Naive thymus-derived CD4-positive, alpha-beta T cell (primary cell): ENCODE measurements at regions of chr5 and their contacts with region 1.

Region 1: DNA sequence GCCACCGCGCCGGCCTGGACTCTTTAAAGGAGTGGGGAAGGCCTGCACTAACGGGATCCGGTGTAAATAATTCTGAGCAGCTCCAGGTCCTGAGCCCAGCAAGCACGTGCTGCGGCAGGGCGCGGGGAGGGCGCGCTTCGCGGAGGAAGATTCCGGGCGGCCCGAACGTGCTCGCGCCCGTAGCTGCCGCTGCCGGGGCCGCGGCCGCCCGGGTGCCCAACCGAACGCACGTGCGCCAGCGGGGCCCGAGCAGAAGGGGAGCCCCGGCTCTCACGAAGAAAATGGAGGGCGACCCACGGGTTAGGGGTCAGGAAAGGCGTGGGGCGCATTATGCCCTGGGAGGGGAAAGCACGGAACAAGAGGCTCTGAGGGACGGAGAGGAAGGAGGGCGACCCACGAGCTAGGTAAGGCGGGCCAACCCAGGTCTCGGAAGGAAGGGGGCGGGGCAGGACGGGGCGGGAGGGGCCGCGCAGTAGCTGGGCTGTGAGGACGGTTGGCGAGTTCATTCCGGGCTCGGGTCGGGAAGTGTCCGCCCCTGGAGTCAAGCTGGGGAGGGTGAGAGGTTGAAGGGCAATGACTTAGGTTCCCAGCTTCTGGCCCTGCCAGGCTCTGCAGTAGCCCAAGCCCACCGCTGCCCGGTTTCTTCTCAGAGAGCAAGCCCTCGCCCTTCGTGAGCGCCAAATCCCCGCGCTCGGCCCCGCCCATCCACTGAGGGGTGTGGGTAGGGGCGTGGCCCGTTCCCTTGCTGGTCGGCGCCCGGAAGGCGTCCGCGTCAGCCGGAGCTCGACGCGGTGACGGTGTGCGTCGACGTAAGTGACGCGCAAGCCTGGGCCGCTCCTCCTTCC is at the start of gene ZNF131:
- DNase-seq: peak; percentile 95 to 99 (median 98)
- ATAC-seq: peak; percentile 93
- H3K4me3 ChIP-seq: peak within 1 kb of the TSS; percentile 70
- H3K4me3 Mint-ChIP-seq: peak within 1 kb of the TSS; percentile 89 to 98 (median 96)
- H3K27ac ChIP-seq: peak within 1 kb of the TSS; percentile 97
- H3K27ac Mint-ChIP-seq: peak within 1 kb of the TSS; percentile 86 to 99 (median 96)
- H3K4me1 ChIP-seq: peaks cover 27 to 30% of the 10 kb centered on the region in 2 donors
- H3K4me1 Mint-ChIP-seq: peaks cover 22 to 47% (median 44%) of the 10 kb centered on the region in 7 donors
- H3K27me3 ChIP-seq: no peaks in the 10 kb centered on the region
- H3K27me3 Mint-ChIP-seq: peaks cover 0 to 4% (median 0%) of the 10 kb centered on the region in 5 donors
- total RNA-seq, gene ZNF131: 47.2 to 83.4 (median 67.8) TPM

Region 2: GRCh38 chr5:41903892-41904799 is 1216.8 kb before region 1 on chr5 and contains the start of gene RIMOC1:
- CTCF ChIA-PET with region 1: no interaction called
- POLR2A ChIA-PET with region 1: interaction called, 7 read pairs
- intact Hi-C with region 1: loop called (anchors 1 to 10 kb)
- DNase-seq: peak; percentile 94 to 98 (median 97)
- ATAC-seq: peak; percentile 94
- H3K4me3 ChIP-seq: peak within 1 kb of the TSS; percentile 90
- H3K4me3 Mint-ChIP-seq: peak within 1 kb of the TSS; percentile 84 to 99 (median 98)
- H3K27ac ChIP-seq: peak within 1 kb of the TSS; percentile 85
- H3K27ac Mint-ChIP-seq: peak within 1 kb of the TSS; percentile 97 to 100 (median 99)
- H3K4me1 ChIP-seq: peaks cover 16 to 18% of the 10 kb centered on the region in 2 donors
- H3K4me1 Mint-ChIP-seq: peaks cover 21 to 54% (median 46%) of the 10 kb centered on the region in 7 donors
- H3K27me3 ChIP-seq: no peaks in the 10 kb centered on the region
- H3K27me3 Mint-ChIP-seq: peaks cover 0 to 11% (median 0%) of the 10 kb centered on the region in 5 donors
- total RNA-seq, gene RIMOC1: 13.8 to 40.6 (median 27.5) TPM

Region 3: GRCh38 chr5:42274913-42275312 is 846.0 kb before region 1 on chr5:
- CTCF ChIA-PET with region 1: no interaction called
- POLR2A ChIA-PET with region 1: no interaction called
- intact Hi-C with region 1: no loop called
- DNase-seq: no peak
- ATAC-seq: no peak
- H3K4me3 ChIP-seq: no peak overlapping the region
- H3K4me3 Mint-ChIP-seq: no peak overlapping the region
- H3K27ac ChIP-seq: no peak overlapping the region
- H3K27ac Mint-ChIP-seq: no peak overlapping the region
- H3K4me1 ChIP-seq: no peaks in the 10 kb centered on the region
- H3K4me1 Mint-ChIP-seq: no peaks in the 10 kb centered on the region
- H3K27me3 ChIP-seq: no peaks in the 10 kb centered on the region
- H3K27me3 Mint-ChIP-seq: peaks cover 0 to 7% (median 0%) of the 10 kb centered on the region in 5 donors

Region 4: DNA sequence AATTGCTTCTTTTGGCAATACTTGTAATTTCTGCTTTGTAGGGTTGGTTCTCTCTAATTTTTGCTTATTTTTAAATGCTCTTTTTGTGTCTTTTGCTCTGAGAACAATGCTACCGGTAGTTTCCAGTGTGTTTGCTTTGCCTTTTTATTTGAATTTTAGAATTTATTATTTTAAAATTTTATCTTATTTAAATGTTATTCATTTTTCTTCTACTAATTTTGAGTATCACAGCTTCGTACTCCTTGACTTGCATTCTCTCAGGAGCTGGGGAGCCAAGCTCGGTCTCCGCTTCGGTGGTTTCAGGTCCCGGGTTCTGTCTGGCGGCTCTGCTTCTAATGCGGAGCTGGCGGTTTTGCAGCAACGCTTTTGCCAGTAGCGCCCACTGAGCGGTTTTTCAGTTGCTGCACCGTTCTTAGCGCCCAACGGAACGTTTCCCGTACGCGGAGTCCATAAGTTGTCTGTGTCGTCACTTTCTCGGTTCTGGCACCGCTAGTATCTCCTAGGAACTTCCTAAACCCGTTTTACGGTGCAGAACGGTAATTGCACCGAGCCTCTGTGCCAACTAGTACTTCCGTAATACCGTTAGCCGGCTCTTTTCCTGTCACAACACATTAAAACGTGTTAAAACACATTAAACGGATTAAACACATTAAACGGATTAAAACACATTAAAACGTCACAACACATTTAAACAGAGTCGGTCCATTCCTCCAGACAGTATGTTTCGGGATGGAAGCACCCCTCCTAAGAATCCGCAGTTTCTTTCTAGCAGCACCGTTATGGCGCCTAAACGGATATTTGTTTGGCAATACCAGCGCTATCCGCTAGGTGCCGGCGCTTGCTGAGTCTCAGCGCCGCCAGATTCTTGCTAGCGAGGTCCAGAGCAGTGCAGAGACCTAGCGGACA is 126.4 kb before region 1 on chr5:
- CTCF ChIA-PET with region 1: interaction called, 9 read pairs
- POLR2A ChIA-PET with region 1: interaction called, 114 read pairs
- intact Hi-C with region 1: loop called (anchors 1 kb)
- DNase-seq: peak; percentile 73 to 89 (median 85)
- ATAC-seq: peak; percentile 73
- H3K4me3 ChIP-seq: peak overlapping the region; percentile 84
- H3K4me3 Mint-ChIP-seq: peak overlapping the region; percentile 84 to 100 (median 98)
- H3K27ac ChIP-seq: peak overlapping the region; percentile 89
- H3K27ac Mint-ChIP-seq: peak overlapping the region; percentile 97 to 100 (median 100)
- H3K4me1 ChIP-seq: peaks cover 18 to 21% of the 10 kb centered on the region in 2 donors
- H3K4me1 Mint-ChIP-seq: peaks cover 16 to 49% (median 29%) of the 10 kb centered on the region in 7 donors
- H3K27me3 ChIP-seq: no peaks in the 10 kb centered on the region
- H3K27me3 Mint-ChIP-seq: peaks cover 0 to under 1% (median 0%) of the 10 kb centered on the region in 5 donors

Region 5: DNA sequence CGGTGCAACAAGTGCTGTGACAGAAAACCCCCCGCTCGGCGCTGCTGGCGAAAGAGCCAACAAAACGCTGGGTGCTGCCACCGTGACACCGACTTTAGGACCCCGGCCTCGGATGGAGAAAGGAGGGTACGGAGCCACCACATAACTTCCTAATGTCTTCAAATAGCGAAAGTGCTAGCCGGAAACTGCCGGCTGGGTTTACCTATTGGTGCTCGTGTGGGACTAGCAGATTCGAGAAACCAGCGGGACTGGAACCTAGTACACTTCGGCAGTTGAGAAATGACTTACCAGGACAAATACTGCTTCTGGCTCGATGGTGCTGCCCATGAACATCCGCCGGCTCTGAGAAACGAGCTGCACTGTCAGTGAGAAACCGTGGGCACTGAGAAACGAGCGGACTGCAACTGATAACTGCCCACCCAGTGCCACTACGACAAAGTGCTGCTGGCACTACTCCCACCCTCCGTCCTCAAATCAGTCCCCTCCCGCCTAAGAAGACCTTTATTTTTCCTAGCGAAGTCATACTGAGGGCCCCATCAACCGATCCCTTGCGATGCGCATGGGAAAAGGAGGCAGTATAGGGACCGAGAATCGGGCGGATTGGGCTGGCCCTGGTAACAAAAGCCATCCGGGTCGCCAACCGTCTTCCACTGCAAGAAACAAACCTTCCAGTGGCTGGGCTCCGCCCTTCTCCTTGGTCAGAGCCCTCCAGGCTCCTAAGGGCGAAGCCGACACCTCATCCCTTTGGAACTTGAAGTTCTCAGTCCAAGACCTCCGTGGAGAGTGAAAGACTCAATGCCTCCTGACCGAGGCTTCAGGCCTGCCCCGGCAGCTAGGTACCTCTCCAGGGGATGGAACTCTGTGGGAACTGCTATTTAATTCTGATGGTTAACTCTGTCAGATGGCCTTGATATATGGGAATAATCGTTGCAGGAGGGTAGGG is 53.9 kb before region 1 on chr5:
- CTCF ChIA-PET with region 1: interaction called, 13 read pairs
- POLR2A ChIA-PET with region 1: interaction called, 127 read pairs
- intact Hi-C with region 1: loop called (anchors 1 kb)
- DNase-seq: peak; percentile 80 to 96 (median 89)
- ATAC-seq: peak; percentile 69
- H3K4me3 ChIP-seq: peak overlapping the region; percentile 82
- H3K4me3 Mint-ChIP-seq: peak overlapping the region; percentile 93 to 100 (median 98)
- H3K27ac ChIP-seq: peak overlapping the region; percentile 90
- H3K27ac Mint-ChIP-seq: peak overlapping the region; percentile 99 to 100 (median 99)
- H3K4me1 ChIP-seq: peaks cover 25 to 33% of the 10 kb centered on the region in 2 donors
- H3K4me1 Mint-ChIP-seq: peaks cover 26 to 67% (median 44%) of the 10 kb centered on the region in 7 donors
- H3K27me3 ChIP-seq: no peaks in the 10 kb centered on the region
- H3K27me3 Mint-ChIP-seq: no peaks in the 10 kb centered on the region

Region 6: DNA sequence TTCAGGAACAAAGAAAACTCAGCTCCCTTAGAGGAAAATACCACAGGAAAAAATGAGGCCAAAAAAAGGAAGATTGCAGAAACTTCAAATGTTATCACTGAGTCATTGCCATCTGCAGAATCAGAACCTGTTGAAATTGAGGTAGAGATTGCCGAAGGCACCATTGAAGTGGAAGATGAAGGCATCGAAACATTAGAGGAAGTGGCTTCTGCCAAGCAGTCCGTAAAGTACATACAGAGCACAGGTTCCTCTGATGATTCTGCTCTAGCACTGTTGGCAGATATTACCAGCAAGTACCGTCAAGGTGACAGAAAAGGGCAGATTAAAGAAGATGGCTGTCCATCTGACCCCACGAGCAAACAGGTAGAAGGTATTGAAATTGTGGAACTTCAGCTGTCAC is 40.3 kb after region 1 on chr5:
- CTCF ChIA-PET with region 1: no interaction called
- POLR2A ChIA-PET with region 1: interaction called, 3 read pairs
- intact Hi-C with region 1: loop called in 1 of 2 experiments (anchors 5 kb)
- DNase-seq: peak in 6 of 9 donors; percentile 20 to 60 (median 49)
- ATAC-seq: peak; percentile 74
- H3K4me3 ChIP-seq: no peak overlapping the region
- H3K4me3 Mint-ChIP-seq: peak overlapping the region in 6 of 10 donors; percentile 6 to 51 (median 27)
- H3K27ac ChIP-seq: peak overlapping the region; percentile 14
- H3K27ac Mint-ChIP-seq: peak overlapping the region; percentile 9 to 87 (median 63)
- H3K4me1 ChIP-seq: peaks cover 0 to 6% of the 10 kb centered on the region in 2 donors
- H3K4me1 Mint-ChIP-seq: peaks cover 14 to 46% (median 23%) of the 10 kb centered on the region in 7 donors
- H3K27me3 ChIP-seq: no peaks in the 10 kb centered on the region
- H3K27me3 Mint-ChIP-seq: no peaks in the 10 kb centered on the region

Region 7: GRCh38 chr5:43396762-43397304 is 275.9 kb after region 1 on chr5:
- CTCF ChIA-PET with region 1: interaction called, 3 read pairs
- POLR2A ChIA-PET with region 1: no interaction called
- intact Hi-C with region 1: loop called (anchors 1 to 5 kb)
- DNase-seq: peak; percentile 42 to 74 (median 66)
- ATAC-seq: peak; percentile 96
- H3K4me3 ChIP-seq: peak overlapping the region; percentile 80
- H3K4me3 Mint-ChIP-seq: peak overlapping the region; percentile 88 to 100 (median 98)
- H3K27ac ChIP-seq: peak overlapping the region; percentile 76
- H3K27ac Mint-ChIP-seq: peak overlapping the region; percentile 93 to 99 (median 97)
- H3K4me1 ChIP-seq: peaks cover 3 to 7% of the 10 kb centered on the region in 2 donors
- H3K4me1 Mint-ChIP-seq: peaks cover 15 to 62% (median 41%) of the 10 kb centered on the region in 7 donors
- H3K27me3 ChIP-seq: no peaks in the 10 kb centered on the region
- H3K27me3 Mint-ChIP-seq: no peaks in the 10 kb centered on the region

Region 8: GRCh38 chr5:44808435-44809214 is 1687.7 kb after region 1 on chr5 and contains the start of gene MRPS30:
- CTCF ChIA-PET with region 1: no interaction called
- POLR2A ChIA-PET with region 1: no interaction called
- intact Hi-C with region 1: loop called (anchors 5 kb)
- DNase-seq: peak; percentile 65 to 96 (median 94)
- ATAC-seq: peak; percentile 98
- H3K4me3 ChIP-seq: peak within 1 kb of the TSS; percentile 85
- H3K4me3 Mint-ChIP-seq: peak within 1 kb of the TSS; percentile 86 to 98 (median 96)
- H3K27ac ChIP-seq: peak within 1 kb of the TSS; percentile 81
- H3K27ac Mint-ChIP-seq: peak within 1 kb of the TSS; percentile 84 to 98 (median 95)
- H3K4me1 ChIP-seq: peaks cover 0 to 20% of the 10 kb centered on the region in 2 donors
- H3K4me1 Mint-ChIP-seq: peaks cover 12 to 53% (median 36%) of the 10 kb centered on the region in 7 donors
- H3K27me3 ChIP-seq: no peaks in the 10 kb centered on the region
- H3K27me3 Mint-ChIP-seq: peaks cover 0 to 5% (median 3%) of the 10 kb centered on the region in 5 donors
- total RNA-seq, gene MRPS30: 31.1 to 61.0 (median 47.1) TPM

Region 9: DNA sequence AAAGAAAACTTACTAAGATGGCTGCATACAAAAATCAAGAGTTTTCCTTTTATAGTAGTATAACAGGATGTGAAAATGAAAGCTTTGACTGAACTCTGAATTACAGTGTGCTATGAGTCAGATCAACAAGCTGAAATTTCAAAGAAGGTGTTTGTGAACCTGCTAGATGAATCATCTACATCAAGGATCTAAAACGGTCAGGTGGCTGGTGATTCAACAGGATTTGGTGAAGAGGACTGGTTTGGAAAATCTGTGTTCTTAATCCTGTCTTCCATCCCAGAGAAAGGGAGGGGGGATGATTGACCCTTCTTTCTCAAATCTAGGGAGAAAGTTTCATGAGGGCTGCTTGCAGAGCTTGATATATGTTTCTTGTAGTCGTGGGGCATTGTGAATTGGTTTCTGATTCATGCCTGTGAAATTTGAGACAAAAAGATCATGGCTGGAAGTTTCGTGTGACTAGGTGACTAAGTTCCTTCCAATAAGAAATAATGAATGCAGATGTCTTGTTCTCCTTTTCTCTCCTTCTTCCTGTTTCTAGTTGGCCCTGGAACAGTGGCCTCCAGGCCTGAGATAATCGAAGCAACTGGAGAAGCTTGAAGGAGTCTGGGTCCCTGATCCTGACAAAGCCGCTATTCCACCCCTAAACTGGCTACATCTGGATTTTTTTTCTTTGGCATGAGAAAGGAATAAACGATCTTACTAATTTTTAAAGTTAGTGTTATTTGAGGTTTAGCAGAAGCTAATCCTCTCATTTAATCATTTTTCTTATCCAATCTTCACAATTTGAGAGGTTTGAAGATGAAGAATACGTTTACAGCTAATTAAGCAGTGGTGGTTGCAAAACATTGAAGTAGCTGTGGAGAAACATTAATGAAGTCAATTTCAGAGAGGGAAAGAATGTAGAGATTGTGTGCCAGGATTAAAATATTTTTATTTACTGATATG is 1755.0 kb after region 1 on chr5:
- CTCF ChIA-PET with region 1: no interaction called
- POLR2A ChIA-PET with region 1: no interaction called
- intact Hi-C with region 1: no loop called
- DNase-seq: peak in 5 of 9 donors; percentile 3 to 22 (median 11)
- ATAC-seq: peak; percentile 63
- H3K4me3 ChIP-seq: no peak overlapping the region
- H3K4me3 Mint-ChIP-seq: peak overlapping the region in 7 of 10 donors; percentile 12 to 69 (median 45)
- H3K27ac ChIP-seq: no peak overlapping the region
- H3K27ac Mint-ChIP-seq: peak overlapping the region; percentile 21 to 95 (median 62)
- H3K4me1 ChIP-seq: no peaks in the 10 kb centered on the region
- H3K4me1 Mint-ChIP-seq: peaks cover 0 to 23% (median 14%) of the 10 kb centered on the region in 7 donors
- H3K27me3 ChIP-seq: no peaks in the 10 kb centered on the region
- H3K27me3 Mint-ChIP-seq: no peaks in the 10 kb centered on the region